CD4-positive, alpha-beta T cell (primary cell): ENCODE measurements at regions of chr1 and their contacts with region 1.

Region 1: DNA sequence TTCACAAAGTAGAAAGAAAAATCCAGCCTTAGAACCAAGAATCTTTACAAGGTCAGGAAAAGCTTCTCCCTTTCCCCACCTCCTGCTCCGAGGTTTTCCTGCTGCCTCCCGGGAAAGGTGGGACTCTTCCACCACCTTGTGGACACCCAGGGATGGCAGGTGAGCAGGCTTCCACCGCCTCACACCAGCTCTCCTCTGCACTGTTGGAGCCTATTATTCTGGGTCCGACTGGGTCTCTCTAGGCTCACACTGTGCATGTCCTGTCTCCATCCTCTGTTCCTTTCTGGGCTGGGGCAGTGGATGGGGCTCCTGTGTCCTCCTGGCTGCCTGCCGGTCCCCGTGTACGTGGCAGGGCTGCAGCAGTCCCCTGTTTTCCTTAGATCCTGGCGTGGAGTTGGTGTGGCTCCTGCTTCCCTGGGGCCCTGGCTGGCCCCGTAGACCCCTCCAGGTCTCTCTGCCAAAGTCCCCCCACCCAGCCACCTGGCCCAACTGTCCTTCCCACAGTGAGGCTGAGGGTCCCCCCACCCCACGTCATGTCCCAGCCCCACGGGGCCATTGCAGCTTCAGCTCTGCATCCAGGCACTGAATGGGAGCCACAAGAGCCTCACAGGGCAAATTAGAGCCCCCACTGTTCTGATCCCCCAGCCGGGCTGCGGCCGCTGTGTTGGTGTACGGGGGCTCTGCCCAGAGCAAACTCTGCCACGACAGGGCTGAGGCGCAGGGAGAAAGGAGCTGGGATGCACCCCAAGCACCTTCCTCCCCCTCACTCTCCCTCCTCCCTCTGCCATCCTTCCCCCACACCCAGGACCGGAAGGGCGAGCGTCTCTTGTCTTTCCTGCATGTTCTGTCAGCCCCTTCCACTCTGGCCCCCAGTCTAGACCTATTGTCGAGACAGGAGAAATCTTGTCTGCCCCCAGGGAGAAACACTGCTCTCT is 3.3 kb upstream of the SLC45A1 start:
- DNase-seq: peak; percentile 29 to 75 (median 46)
- ATAC-seq: peak; percentile 30
- H3K4me3 ChIP-seq: no peak overlapping the region
- H3K4me3 Mint-ChIP-seq: no peak overlapping the region
- H3K27ac ChIP-seq: no peak overlapping the region
- H3K27ac Mint-ChIP-seq: no peak overlapping the region
- H3K4me1 ChIP-seq: peaks cover 29% of the 10 kb centered on the region
- H3K4me1 Mint-ChIP-seq: peaks cover 21% of the 10 kb centered on the region
- H3K27me3 ChIP-seq: peaks cover 17 to 21% of the 10 kb centered on the region in 2 experiments
- H3K27me3 Mint-ChIP-seq: peaks cover 34% of the 10 kb centered on the region
- CTCF ChIP-seq: peak; percentile 74

Region 2: DNA sequence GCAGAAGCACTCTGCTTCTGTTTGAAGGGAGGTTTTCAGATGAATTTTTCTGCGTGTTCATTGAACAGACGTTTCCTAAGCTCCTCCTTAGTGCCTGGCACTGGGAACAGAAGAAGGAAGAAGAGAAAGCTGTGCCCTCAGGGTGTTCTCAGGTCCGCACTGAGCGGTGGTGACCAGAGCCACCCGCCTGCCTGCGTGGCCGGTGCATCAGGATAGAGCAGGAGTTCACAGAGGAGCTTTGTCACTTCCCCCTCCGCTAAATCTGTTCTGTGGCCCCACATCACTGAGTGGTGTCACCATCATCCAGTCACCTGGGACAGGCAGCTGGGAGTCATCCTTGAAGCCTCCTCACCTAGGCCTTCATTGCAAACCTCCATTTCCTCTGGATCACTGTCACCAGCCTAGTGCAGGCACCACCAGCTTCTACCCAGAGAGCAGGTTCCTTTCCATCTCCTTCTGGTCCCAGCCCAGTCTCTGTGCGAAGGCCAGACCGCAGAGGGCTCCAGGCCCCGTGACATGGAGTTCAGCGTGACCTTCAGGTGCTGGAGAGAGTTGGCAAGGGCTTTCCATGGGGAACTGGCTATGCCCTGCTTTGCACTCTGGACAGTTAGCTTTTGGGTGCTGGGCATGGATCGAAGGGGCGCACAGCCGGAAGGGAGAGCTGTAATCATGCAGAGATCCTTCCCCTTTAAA is 331.4 kb before region 1 on chr1:
- CTCF ChIA-PET with region 1: interaction called, 5 read pairs
- POLR2A ChIA-PET with region 1: no interaction called
- intact Hi-C with region 1: loop called in 1 of 2 experiments (anchors 1 kb)
- DNase-seq: no peak
- ATAC-seq: no peak
- H3K4me3 ChIP-seq: no peak overlapping the region
- H3K4me3 Mint-ChIP-seq: no peak overlapping the region
- H3K27ac ChIP-seq: no peak overlapping the region
- H3K27ac Mint-ChIP-seq: no peak overlapping the region
- H3K4me1 ChIP-seq: peaks cover 6% of the 10 kb centered on the region
- H3K4me1 Mint-ChIP-seq: peaks cover 6% of the 10 kb centered on the region
- H3K27me3 ChIP-seq: no peaks in the 10 kb centered on the region
- H3K27me3 Mint-ChIP-seq: no peaks in the 10 kb centered on the region
- CTCF ChIP-seq: no peak

Region 3: GRCh38 chr1:8015036-8015808 is 299.4 kb before region 1 on chr1:
- CTCF ChIA-PET with region 1: interaction called, 11 read pairs
- POLR2A ChIA-PET with region 1: interaction called, 5 read pairs
- intact Hi-C with region 1: loop called (anchors 1 kb)
- DNase-seq: peak in 8 of 14 experiments; percentile 15 to 76 (median 44)
- ATAC-seq: peak; percentile 70
- H3K4me3 ChIP-seq: no peak overlapping the region
- H3K4me3 Mint-ChIP-seq: no peak overlapping the region
- H3K27ac ChIP-seq: no peak overlapping the region
- H3K27ac Mint-ChIP-seq: no peak overlapping the region
- H3K4me1 ChIP-seq: no peaks in the 10 kb centered on the region
- H3K4me1 Mint-ChIP-seq: no peaks in the 10 kb centered on the region
- H3K27me3 ChIP-seq: peaks cover 4 to 16% of the 10 kb centered on the region in 2 experiments
- H3K27me3 Mint-ChIP-seq: peaks cover 36% of the 10 kb centered on the region
- CTCF ChIP-seq: peak; percentile 73